CD4-positive, alpha-beta memory T cell (primary cell): ENCODE measurements at regions of chr15 and their contacts with region 1.

Region 1: GRCh38 chr15:59751552-59752413 is 62.7 kb upstream of the BNIP2 start:
- DNase-seq: peak; percentile 44 to 76 (median 70)
- H3K4me3 ChIP-seq: no peak overlapping the region
- H3K4me3 Mint-ChIP-seq: peak overlapping the region in 3 of 8 donors; percentile 3 to 35 (median 13)
- H3K27ac ChIP-seq: no peak overlapping the region
- H3K27ac Mint-ChIP-seq: peak overlapping the region in 5 of 7 donors; percentile 5 to 70 (median 61)
- H3K4me1 ChIP-seq: peaks cover 10% of the 10 kb centered on the region
- H3K4me1 Mint-ChIP-seq: peaks cover 10 to 16% (median 13%) of the 10 kb centered on the region in 4 donors
- H3K27me3 ChIP-seq: no peaks in the 10 kb centered on the region
- H3K27me3 Mint-ChIP-seq: peaks cover 7 to 12% of the 10 kb centered on the region in 2 donors

Region 2: GRCh38 chr15:59725172-59725486 is 26.7 kb before region 1 on chr15:
- CTCF ChIA-PET with region 1: interaction called, 8 read pairs
- POLR2A ChIA-PET with region 1: no interaction called
- intact Hi-C with region 1: loop called (anchors 2 kb)
- DNase-seq: no peak
- H3K4me3 ChIP-seq: no peak overlapping the region
- H3K4me3 Mint-ChIP-seq: no peak overlapping the region
- H3K27ac ChIP-seq: no peak overlapping the region
- H3K27ac Mint-ChIP-seq: no peak overlapping the region
- H3K4me1 ChIP-seq: peaks cover 3% of the 10 kb centered on the region
- H3K4me1 Mint-ChIP-seq: peaks cover 0 to 2% (median 0%) of the 10 kb centered on the region in 4 donors
- H3K27me3 ChIP-seq: peaks cover 4% of the 10 kb centered on the region
- H3K27me3 Mint-ChIP-seq: peaks cover 8 to 17% of the 10 kb centered on the region in 2 donors

Region 3: GRCh38 chr15:59797756-59798604 is 46.2 kb after region 1 on chr15:
- CTCF ChIA-PET with region 1: interaction called, 18 read pairs
- POLR2A ChIA-PET with region 1: interaction called, 31 read pairs
- intact Hi-C with region 1: loop called (anchors 1 kb)
- DNase-seq: no peak
- H3K4me3 ChIP-seq: no peak overlapping the region
- H3K4me3 Mint-ChIP-seq: peak overlapping the region; percentile 69 to 93 (median 81)
- H3K27ac ChIP-seq: peak overlapping the region; percentile 38
- H3K27ac Mint-ChIP-seq: peak overlapping the region; percentile 43 to 98 (median 92)
- H3K4me1 ChIP-seq: peaks cover 88% of the 10 kb centered on the region
- H3K4me1 Mint-ChIP-seq: peaks cover 45 to 85% (median 64%) of the 10 kb centered on the region in 4 donors
- H3K27me3 ChIP-seq: no peaks in the 10 kb centered on the region
- H3K27me3 Mint-ChIP-seq: no peaks in the 10 kb centered on the region

Region 4: DNA sequence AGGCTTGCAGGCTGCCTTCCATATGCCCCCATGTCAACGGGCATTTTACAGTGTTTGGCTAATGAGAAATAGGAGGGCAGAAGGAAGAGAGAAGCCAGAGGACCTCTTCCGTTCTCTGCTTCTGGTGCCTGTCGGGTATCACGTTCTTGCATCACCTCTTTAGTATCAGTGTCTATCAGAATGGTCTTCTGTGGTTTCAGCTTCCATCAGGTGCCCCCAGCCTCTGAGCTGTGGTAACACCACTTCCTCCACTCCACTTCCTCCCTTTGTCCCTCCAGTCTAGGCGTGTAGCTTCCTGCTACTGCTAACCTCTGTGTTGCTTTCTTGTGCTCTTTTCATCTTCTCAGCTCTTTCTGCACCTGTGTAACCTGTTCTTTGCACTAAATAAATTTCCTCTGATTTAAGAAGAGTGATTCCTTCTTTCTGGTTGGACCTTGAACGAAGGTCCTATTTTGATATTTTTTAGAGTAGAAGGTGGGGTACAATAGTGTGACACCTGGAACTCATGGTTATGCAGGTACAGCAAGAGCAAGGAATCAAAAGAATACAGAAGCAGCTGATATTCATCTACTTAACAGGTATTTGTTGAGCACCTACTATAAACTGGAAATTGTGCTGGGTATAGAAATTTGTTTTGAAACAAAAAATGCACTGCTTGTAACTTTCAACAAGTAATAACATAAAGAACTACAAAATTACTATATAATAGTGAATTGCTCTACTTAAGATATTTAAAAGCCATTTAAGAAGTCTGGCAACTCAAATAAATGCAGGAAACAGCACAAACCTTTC is 224.9 kb after region 1 on chr15:
- CTCF ChIA-PET with region 1: no interaction called
- POLR2A ChIA-PET with region 1: no interaction called
- intact Hi-C with region 1: loop called (anchors 5 kb)
- DNase-seq: peak; percentile 78 to 87 (median 82)
- H3K4me3 ChIP-seq: no peak overlapping the region
- H3K4me3 Mint-ChIP-seq: peak overlapping the region; percentile 25 to 77 (median 52)
- H3K27ac ChIP-seq: no peak overlapping the region
- H3K27ac Mint-ChIP-seq: peak overlapping the region; percentile 34 to 87 (median 53)
- H3K4me1 ChIP-seq: peaks cover 28% of the 10 kb centered on the region
- H3K4me1 Mint-ChIP-seq: peaks cover 21 to 34% (median 23%) of the 10 kb centered on the region in 4 donors
- H3K27me3 ChIP-seq: no peaks in the 10 kb centered on the region
- H3K27me3 Mint-ChIP-seq: peaks cover 0 to 2% of the 10 kb centered on the region in 2 donors

Region 5: DNA sequence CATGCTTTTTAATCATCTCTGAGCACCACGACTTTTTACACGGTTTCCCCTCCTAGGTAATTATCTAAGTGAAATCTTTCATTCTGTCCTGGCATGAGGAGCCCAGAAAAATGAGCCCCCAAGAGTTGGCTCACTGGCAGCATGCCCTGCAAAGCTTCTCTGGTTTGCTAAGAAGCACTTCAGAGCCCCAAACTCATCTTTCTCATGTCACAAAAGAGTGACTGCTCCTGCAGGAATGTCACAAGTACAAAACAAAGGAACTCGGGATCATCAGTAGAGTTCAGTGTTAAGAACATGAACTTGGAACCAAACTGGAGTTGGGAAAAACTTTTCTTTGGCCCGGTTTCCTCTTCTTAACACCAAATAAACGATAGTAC is 376.2 kb after region 1 on chr15:
- CTCF ChIA-PET with region 1: interaction called, 10 read pairs
- POLR2A ChIA-PET with region 1: interaction called, 7 read pairs
- intact Hi-C with region 1: loop called (anchors 1 kb)
- DNase-seq: no peak
- H3K4me3 ChIP-seq: peak overlapping the region; percentile 56 to 81
- H3K4me3 Mint-ChIP-seq: peak overlapping the region; percentile 74 to 94 (median 92)
- H3K27ac ChIP-seq: peak overlapping the region; percentile 58
- H3K27ac Mint-ChIP-seq: peak overlapping the region; percentile 92 to 97 (median 96)
- H3K4me1 ChIP-seq: peaks cover 28% of the 10 kb centered on the region
- H3K4me1 Mint-ChIP-seq: peaks cover 19 to 45% (median 33%) of the 10 kb centered on the region in 4 donors
- H3K27me3 ChIP-seq: no peaks in the 10 kb centered on the region
- H3K27me3 Mint-ChIP-seq: no peaks in the 10 kb centered on the region

Region 6: DNA sequence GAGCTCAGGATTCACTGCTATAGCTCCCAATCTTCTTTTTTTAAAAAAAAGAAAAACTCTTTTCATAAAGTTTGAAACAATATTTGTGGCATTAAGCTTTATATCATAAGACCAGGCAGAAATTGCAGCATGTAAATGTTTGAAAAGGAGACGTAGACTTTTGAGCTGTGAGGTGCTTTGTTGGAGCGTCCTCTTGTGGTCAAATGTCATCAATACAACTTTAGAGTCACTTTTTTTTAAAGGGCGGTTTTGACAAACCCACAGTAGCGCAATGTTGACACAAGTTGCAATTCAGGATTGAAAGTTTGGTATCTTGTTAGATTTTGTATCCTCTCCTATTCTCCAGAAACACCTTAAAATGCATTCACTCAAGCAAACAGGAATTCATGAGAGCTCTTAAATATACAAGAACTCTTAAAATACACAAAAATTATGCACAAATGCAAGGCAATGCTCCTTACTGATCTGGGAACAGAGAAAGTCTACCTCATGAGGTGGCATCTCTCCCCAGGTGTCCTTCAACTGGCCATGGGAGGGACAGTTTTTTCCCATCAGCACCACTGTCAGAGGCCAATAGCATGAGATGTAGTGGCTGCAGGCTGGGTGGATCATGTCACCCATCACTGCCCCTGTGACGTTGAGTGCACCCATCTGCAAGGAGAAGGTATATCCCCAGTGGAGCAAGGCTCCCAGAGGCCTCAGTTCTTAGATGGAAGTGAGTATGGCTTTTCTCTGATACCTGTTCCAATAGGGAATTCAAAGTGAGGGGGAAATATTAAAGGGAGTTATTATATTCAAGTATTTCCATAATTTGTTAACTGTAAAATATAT is 575.3 kb after region 1 on chr15:
- CTCF ChIA-PET with region 1: interaction called, 45 read pairs
- POLR2A ChIA-PET with region 1: interaction called, 3 read pairs
- intact Hi-C with region 1: loop called (anchors 1 kb)
- DNase-seq: peak in 4 of 5 donors; percentile 55 to 58 (median 57)
- H3K4me3 ChIP-seq: no peak overlapping the region
- H3K4me3 Mint-ChIP-seq: no peak overlapping the region
- H3K27ac ChIP-seq: no peak overlapping the region
- H3K27ac Mint-ChIP-seq: no peak overlapping the region
- H3K4me1 ChIP-seq: no peaks in the 10 kb centered on the region
- H3K4me1 Mint-ChIP-seq: peaks cover 2 to 7% (median 6%) of the 10 kb centered on the region in 4 donors
- H3K27me3 ChIP-seq: peaks cover 23% of the 10 kb centered on the region
- H3K27me3 Mint-ChIP-seq: peaks cover 18 to 27% of the 10 kb centered on the region in 2 donors

Region 7: DNA sequence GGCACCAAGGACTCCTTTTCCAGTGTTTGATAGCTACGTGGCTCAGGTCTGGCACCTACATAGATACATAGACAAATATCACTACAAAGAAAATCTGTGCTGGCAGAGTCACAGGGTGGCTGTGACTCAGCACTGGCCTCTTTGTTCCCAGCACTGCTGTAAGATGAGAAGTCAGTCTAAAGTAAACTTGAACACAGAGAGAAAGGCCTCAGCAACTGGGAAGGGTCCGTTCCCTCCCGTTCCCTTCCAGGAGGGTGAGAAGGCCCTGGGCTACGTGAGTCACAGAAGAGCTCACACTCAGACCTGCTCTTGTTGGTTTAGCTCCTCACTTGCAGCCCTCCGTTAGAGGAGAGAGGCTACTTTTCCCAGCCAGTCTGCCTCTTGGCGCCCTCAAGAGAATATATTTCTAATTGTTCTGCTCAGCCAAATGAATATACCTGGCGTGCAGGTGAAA is 622.9 kb after region 1 on chr15:
- CTCF ChIA-PET with region 1: no interaction called
- POLR2A ChIA-PET with region 1: no interaction called
- intact Hi-C with region 1: no loop called
- DNase-seq: no peak
- H3K4me3 ChIP-seq: no peak overlapping the region
- H3K4me3 Mint-ChIP-seq: no peak overlapping the region
- H3K27ac ChIP-seq: no peak overlapping the region
- H3K27ac Mint-ChIP-seq: no peak overlapping the region
- H3K4me1 ChIP-seq: peaks cover 5% of the 10 kb centered on the region
- H3K4me1 Mint-ChIP-seq: peaks cover 14 to 21% (median 19%) of the 10 kb centered on the region in 4 donors
- H3K27me3 ChIP-seq: no peaks in the 10 kb centered on the region
- H3K27me3 Mint-ChIP-seq: no peaks in the 10 kb centered on the region